CD8-positive, alpha-beta memory T cell (primary cell): ENCODE measurements at regions of chr7 and their contacts with region 1.

Region 1: DNA sequence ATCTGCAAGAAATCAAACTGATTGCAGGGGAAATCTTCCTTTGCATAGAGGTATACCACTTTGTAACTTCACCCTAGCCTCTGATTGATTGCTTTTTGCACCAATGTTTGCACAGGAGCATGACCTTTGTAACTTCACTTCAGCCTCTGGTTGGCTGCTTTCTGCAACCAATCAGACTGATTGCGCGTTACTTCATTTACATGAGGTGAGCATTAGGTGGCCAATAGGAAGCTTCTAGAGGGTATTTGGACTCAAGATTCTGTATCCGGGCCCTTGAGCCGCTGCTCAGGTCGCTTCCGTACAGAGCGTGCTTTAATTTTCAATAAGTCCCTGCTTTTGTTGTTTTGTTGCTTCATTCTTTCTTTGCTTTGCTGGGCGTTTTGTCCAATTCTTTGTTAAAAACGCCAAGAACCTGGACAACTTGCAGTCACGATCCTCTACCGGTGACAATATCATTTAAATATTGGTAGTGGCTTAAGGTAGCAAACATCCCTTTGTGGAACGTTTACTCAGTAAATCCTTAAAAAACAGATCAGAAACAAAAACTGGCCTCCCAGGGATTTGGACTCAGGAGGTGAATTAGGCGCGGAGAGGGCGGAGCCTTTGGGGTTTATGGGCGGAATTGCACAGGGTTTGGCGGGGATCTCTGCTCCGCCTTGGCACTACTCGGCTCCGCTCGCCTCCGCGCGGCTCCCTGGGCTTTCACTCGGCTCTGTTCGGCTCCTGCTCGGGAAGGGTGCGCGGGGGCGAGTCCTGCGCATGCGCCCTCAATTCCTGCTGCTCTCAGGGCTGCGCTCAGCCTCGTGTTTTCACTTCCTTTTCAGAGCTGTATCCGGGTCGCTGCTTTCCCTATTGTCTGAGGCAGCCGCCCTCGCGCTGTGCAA is at the start of gene PHF14:
- DNase-seq: peak; percentile 90 to 97 (median 95)
- H3K4me3 ChIP-seq: peak within 1 kb of the TSS; percentile 93
- H3K4me3 Mint-ChIP-seq: peak within 1 kb of the TSS; percentile 89 to 98 (median 95)
- H3K27ac ChIP-seq: peak within 1 kb of the TSS; percentile 66
- H3K27ac Mint-ChIP-seq: peak within 1 kb of the TSS; percentile 86 to 99 (median 96)
- H3K4me1 ChIP-seq: peaks cover 18% of the 10 kb centered on the region
- H3K4me1 Mint-ChIP-seq: peaks cover 27 to 54% (median 49%) of the 10 kb centered on the region in 3 donors
- H3K27me3 ChIP-seq: no peaks in the 10 kb centered on the region
- H3K27me3 Mint-ChIP-seq: peaks cover 15 to 17% of the 10 kb centered on the region in 2 donors
- total RNA-seq, gene PHF14: 35.8 to 38.7 TPM

Region 2: GRCh38 chr7:10939911-10940703 is 33.2 kb before region 1 on chr7:
- CTCF ChIA-PET with region 1: interaction called, 5 read pairs
- POLR2A ChIA-PET with region 1: interaction called, 45 read pairs
- DNase-seq: peak; percentile 77 to 93 (median 92)
- H3K4me3 ChIP-seq: peak overlapping the region; percentile 90
- H3K4me3 Mint-ChIP-seq: no peak overlapping the region
- H3K27ac ChIP-seq: peak overlapping the region; percentile 90
- H3K27ac Mint-ChIP-seq: no peak overlapping the region
- H3K4me1 ChIP-seq: peaks cover 21% of the 10 kb centered on the region
- H3K4me1 Mint-ChIP-seq: peaks cover 15 to 43% (median 31%) of the 10 kb centered on the region in 3 donors
- H3K27me3 ChIP-seq: no peaks in the 10 kb centered on the region
- H3K27me3 Mint-ChIP-seq: peaks cover 0 to 2% of the 10 kb centered on the region in 2 donors